ENCODE measurements at regions of chr1 and their contacts with region 1.

Region 1: DNA sequence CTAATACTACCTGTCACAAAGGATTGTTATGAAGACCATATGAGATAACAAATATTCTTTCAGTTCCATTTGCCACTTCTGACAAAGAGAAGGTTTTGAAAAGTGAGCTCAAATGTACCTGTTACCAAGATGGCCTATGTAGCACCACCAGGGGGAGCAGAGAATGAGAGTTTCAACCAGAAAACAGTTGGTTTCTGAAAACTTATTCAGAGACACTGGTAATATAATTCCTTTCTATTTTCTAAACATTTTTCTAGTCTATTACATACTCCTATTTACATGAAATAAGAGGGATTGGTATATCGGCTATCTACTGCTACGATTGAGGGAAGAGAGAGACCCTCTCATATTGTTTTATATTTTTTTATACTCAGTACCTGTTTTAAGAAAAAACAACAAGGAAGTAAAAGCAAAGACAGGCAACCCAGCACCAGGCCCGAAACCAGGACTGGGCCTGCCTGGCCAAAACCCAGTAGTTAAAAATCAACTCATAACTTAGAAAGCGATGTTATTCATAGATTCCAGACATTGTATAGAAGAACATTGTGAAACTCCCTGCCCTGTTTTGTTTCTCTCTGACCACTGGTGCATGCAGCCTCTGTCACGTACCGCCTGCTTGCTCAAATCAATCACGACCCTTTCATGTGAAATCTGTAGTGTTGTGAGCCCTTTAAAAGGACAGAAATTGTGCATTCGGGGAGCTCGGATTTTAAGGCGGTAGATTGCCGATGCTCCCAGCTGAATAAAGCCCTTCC is 48.3 kb downstream of the IL23R start:
- DNase-seq: peak; percentile 22
- CTCF ChIP-seq: peak; percentile 49

Region 2: DNA sequence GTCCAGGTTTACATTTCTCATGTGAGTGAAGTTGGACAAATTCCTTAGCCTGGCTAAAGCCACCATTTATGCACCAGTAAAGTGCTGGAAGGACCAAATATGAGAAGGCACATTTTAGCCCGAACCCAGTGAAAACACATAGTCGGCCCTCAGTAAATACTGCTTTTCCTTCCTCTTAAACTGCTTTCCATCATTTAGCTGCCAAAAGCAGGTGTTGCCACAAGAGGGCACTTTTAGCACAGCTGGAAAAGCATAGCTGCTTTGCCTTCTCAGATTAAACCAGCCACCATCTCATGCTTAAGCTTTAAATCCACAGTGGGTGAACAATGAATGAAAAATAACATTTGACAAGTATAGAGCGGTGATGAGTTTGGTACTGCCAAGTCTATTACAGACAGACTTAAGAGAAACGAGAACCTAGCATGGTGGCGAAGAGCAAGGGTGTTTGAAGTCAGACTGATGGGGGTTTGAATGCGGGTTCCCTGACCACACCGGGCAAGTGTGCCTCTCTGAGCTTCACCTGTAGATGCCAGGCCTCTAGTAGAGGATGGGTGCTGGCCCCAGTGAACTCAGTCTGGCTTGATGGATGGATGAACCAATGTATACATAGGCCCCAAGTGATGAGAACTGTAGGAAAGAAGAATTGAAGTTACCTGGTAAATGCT is 218.4 kb before region 1 on chr1:
- CTCF ChIA-PET with region 1: interaction called, 62 read pairs
- POLR2A ChIA-PET with region 1: no interaction called
- DNase-seq: peak; percentile 58
- CTCF ChIP-seq: peak; percentile 88

Region 3: GRCh38 chr1:67149179-67149770 is 65.3 kb before region 1 on chr1:
- CTCF ChIA-PET with region 1: interaction called, 55 read pairs
- POLR2A ChIA-PET with region 1: no interaction called
- DNase-seq: peak; percentile 73
- CTCF ChIP-seq: peak; percentile 65

Region 4: DNA sequence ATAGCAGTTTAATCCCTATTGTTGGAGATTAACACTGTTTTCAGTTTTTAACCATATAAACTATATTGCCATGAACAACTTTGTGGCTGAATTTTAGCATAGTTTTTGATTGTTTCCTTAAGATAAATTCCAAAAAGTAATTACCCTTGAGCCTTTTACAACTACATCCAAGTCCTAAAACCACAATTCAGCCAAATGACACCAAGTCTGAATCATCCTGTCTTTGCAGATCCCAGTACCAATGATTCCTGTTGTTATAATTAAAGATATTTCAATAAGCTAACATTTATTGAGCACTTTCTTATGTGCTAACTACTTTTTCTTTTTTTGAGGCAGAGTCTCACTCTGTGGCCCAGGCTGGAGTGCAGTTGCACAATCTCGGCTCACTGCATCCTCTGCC is 12.7 kb before region 1 on chr1:
- CTCF ChIA-PET with region 1: interaction called, 66 read pairs
- POLR2A ChIA-PET with region 1: no interaction called
- DNase-seq: no peak
- CTCF ChIP-seq: no peak

Region 5: DNA sequence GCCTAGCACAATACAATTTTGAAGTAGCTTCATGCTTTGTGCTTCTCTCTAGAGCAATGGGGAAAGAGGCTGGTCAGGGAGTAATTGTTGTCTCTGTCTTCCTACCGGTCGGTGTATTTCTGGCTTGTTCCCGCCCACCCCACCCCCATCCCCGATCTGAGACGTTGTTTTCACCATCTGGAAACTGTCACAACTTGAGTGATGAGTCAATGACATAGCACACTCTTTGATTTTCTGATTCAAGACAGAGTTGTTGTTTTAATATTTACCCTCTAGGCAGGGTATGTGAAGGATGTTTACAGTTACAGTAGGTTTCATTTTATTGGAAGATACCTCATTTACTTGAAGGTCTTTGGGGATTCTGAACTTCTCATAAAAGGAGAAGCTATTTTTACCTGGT is 100.1 kb after region 1 on chr1:
- CTCF ChIA-PET with region 1: interaction called, 12 read pairs
- POLR2A ChIA-PET with region 1: no interaction called
- DNase-seq: peak; percentile 17
- CTCF ChIP-seq: no peak

Region 6: DNA sequence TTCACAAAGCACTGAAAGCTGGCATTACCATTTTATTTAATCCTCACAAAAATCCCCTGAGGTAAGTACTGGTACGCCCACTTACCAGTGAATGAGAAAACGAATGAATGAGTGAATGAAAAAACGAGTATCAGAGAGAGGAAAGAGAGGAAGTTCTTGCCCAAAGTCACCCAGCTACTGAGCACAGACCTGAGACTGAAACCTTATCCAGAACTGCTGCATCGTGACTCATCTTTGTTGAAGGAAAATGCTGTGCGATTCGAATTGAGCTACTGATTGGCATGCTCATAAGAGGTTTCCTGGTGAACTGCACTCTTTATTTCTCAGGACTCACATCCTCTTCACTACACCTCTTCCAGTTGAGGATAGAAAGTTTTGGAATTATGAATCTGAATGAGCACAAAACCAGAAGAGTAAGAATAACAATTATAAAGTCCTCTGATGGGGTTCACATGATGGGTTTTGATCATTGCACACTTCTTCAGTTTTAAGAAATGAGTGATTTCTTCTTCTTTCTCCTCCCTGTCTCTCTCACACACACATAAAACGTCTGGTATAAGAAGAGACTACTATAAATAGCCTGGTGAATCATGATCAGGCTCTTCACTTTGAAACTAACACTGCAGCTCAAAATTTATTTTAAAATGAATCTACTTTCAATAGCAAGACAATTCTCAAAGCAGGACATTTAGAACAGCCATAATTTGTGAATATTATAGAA is 125.2 kb after region 1 on chr1:
- CTCF ChIA-PET with region 1: interaction called, 14 read pairs
- POLR2A ChIA-PET with region 1: no interaction called
- DNase-seq: no peak
- CTCF ChIP-seq: no peak

Region 7: DNA sequence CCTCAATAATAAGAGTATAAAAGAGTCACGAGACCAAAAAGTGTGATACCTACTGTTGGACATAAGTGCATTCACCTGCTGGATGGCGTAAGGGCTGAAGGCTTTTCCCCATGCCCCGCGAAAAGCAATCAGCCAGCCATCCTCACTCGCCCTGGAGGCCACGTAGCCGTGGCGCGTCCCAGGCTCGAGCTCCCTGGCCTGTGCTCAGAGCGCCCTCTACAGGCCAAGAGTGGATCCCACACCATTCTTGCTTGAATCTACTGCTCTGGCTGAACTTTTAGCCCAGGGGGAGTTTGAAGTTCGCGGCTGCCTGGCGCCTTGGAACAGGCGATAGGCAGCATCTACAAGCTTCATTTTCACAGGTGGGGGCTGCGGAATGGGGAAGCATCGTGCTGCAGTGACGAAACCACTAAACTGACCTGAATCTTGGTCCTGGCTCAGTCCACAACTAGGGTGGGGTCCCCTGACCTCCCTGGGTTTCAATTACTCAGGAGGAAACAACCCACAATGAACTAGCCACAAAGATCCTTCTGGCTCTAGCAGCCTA is 285.9 kb after region 1 on chr1:
- CTCF ChIA-PET with region 1: interaction called, 142 read pairs
- POLR2A ChIA-PET with region 1: no interaction called
- DNase-seq: peak; percentile 93
- CTCF ChIP-seq: peak; percentile 98

Measured in GM10248 (cell line).